ENCODE measurements at regions of chr6 and their contacts with region 1.

Region 1: DNA sequence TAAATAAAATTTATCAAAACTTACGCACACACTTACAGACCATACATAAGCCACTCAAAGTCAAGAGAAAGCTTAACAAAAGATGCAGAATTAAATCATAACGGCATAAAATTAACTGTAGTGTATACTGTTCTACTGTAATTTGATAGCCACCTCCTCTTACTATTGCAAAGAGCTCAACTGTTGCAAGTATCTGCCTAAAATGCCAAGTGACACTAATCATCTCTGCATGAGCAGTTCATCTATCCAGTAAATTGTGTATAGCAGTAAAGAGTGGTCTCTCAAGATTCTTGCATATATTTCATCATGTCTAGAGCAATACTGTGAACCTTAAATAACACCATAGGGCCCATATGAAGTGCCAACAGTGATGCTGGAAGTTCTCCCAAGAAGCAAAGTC is 12.3 kb downstream of the OR2H2 start:
- DNase-seq: no peak
- H3K4me3 ChIP-seq: no peak overlapping the region
- H3K27ac ChIP-seq: no peak overlapping the region
- H3K4me1 ChIP-seq: no peaks in the 10 kb centered on the region; a peak in 2 of 7 replicates
- H3K27me3 ChIP-seq: no peaks in the 10 kb centered on the region
- CTCF ChIP-seq: no peak
- EP300 ChIP-seq: no peak
- POLR2A ChIP-seq: peak in 1 of 2 experiments; percentile 24; a peak in 1 of 3 replicates
- RAD21 ChIP-seq: no peak

Region 2: DNA sequence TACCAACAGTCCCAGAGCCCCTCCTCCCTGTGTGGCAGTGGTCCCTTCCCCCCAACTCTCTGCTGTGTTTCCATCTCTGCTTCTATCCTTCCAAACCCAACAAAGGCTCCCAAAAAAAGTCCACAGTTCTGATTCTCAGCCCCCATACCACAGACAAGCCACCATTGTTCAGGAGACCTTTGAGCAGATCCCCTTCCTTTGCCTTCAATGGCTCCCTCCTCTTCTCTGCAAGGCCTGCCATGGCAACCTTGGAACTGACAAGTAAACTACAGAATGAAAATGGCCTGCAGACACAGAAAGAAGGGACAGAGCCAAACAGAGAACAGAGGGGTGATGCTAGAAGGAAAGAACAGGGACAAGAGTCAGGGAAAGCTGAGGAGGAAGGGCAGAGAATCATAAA is 10.9 kb after region 1 on chr6:
- CTCF ChIA-PET with region 1: interaction called, 10 read pairs
- POLR2A ChIA-PET with region 1: interaction called, 31 read pairs
- DNase-seq: no peak
- H3K4me3 ChIP-seq: no peak overlapping the region
- H3K27ac ChIP-seq: no peak overlapping the region
- H3K4me1 ChIP-seq: peaks cover 0 to 4% (median 0%) of the 10 kb centered on the region in 4 experiments; a peak in 3 of 7 replicates
- H3K27me3 ChIP-seq: no peaks in the 10 kb centered on the region
- CTCF ChIP-seq: no peak
- EP300 ChIP-seq: no peak
- POLR2A ChIP-seq: no peak
- RAD21 ChIP-seq: no peak

Region 3: GRCh38 chr6:29617782-29618557 is 20.8 kb after region 1 on chr6:
- CTCF ChIA-PET with region 1: interaction called, 24 read pairs
- POLR2A ChIA-PET with region 1: interaction called, 22 read pairs
- DNase-seq: no peak
- H3K4me3 ChIP-seq: no peak overlapping the region
- H3K27ac ChIP-seq: no peak overlapping the region
- H3K4me1 ChIP-seq: no peaks in the 10 kb centered on the region; a peak in 2 of 7 replicates
- H3K27me3 ChIP-seq: no peaks in the 10 kb centered on the region
- CTCF ChIP-seq: peak; percentile 87 to 97 (median 90)
- EP300 ChIP-seq: no peak
- POLR2A ChIP-seq: no peak
- RAD21 ChIP-seq: peak; percentile 52 to 59

Region 4: DNA sequence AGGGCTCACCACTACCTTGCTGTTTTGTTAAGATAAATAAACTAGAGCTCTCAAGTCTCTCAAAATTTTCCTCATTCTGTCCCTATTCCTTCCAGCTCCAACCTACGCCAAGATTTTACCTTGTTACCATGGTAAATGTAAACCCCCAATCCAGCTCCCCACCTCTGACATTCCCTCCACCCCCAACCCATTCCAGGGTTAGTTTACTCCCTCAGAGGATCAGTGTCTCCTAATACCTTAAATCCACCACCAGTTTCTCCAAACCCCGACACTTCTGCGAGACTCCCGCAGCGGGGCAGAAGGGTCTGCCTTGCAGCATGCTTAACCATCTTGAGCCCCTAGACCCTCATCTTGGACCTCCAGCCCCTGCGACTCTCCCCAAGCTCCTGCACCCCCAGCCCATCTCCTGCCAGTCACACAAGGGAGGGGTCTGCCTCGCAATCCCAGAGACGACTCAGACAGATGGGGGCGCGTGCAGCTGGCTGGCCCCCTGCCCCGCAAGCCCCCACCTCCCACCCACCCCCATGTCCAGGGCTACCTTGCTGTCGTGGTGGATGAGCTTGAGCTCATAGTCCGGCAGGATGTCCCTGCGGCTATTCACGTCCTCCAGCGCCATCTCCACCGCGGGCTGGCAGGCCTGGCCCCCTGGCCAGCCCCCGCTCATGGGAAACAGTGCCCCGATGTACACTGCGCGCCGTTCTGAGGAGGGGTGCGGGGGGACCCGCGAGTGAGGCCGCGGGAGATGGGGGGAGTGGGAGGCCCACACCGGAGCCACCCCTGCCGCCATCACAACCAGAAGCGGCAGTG is 30.0 kb after region 1 on chr6:
- CTCF ChIA-PET with region 1: interaction called, 6 read pairs
- POLR2A ChIA-PET with region 1: interaction called, 33 read pairs
- DNase-seq: no peak
- H3K4me3 ChIP-seq: peak overlapping the region; percentile 61 to 92 (median 70)
- H3K27ac ChIP-seq: no peak overlapping the region
- H3K4me1 ChIP-seq: peaks cover 6 to 52% (median 37%) of the 10 kb centered on the region in 4 experiments
- H3K27me3 ChIP-seq: no peaks in the 10 kb centered on the region
- CTCF ChIP-seq: no peak
- EP300 ChIP-seq: no peak
- POLR2A ChIP-seq: no peak
- RAD21 ChIP-seq: no peak

Region 5: DNA sequence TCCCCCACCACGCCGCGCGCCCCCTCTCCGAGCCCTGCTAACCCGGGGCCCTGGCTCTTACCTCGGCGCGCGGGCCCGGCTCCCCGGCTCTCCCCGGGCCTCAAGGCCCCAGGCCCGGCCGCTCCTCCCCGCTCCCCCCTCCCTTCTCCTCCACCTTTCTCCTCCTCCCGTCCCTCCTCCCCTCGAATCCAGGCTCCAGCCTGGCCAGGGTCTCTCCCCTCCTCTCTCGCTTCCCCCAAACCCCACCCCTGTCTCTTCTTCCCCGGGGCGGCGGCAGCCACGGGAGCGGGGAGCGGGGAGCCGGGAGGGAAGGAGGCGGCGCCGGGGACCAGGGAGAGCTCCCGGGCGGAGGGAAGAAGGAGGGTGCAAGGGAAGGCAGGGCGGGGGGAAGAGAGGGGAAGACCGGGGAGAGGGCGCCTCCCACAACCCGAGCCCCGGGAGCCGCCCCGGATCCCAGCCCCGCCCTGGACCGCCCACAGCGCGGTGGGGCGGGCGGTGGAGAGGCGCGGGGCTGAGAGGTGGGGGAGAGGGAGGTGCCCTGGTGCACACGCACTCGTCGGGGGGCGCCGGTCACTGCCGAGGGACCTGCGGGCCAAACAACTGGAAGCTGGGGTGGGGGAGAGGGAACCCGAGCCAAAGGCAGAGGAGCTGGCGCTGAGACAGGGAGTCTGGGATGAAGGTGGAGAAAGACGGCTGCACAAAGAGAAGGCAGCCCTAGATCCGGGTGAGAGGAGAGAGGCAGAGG is 35.8 kb after region 1 on chr6 and contains the start of gene GABBR1:
- CTCF ChIA-PET with region 1: no interaction called
- POLR2A ChIA-PET with region 1: interaction called, 33 read pairs
- DNase-seq: peak in 1 of 2 experiments; percentile 91
- H3K4me3 ChIP-seq: peak within 1 kb of the TSS; percentile 68 to 84 (median 76)
- H3K27ac ChIP-seq: peak within 1 kb of the TSS; percentile 53; the same call in 1 of the 2 replicates
- H3K4me1 ChIP-seq: peaks cover 4 to 23% (median 13%) of the 10 kb centered on the region in 4 experiments
- H3K27me3 ChIP-seq: no peaks in the 10 kb centered on the region
- CTCF ChIP-seq: no peak
- EP300 ChIP-seq: 0 out of 3 replicates have a peak, but pooled peaks of 1 of the 2 experiments have one; percentile 17
- POLR2A ChIP-seq: no peak; a peak in 1 of 3 replicates
- RAD21 ChIP-seq: no peak
- total RNA-seq, gene GABBR1: 67.8 and 75.9 TPM in 2 replicates

Measured in H1 (cell line).